Mucosa of descending colon (tissue), 3 donors: ENCODE measurements at regions of chr20 and their contacts with region 1.

Region 1: DNA sequence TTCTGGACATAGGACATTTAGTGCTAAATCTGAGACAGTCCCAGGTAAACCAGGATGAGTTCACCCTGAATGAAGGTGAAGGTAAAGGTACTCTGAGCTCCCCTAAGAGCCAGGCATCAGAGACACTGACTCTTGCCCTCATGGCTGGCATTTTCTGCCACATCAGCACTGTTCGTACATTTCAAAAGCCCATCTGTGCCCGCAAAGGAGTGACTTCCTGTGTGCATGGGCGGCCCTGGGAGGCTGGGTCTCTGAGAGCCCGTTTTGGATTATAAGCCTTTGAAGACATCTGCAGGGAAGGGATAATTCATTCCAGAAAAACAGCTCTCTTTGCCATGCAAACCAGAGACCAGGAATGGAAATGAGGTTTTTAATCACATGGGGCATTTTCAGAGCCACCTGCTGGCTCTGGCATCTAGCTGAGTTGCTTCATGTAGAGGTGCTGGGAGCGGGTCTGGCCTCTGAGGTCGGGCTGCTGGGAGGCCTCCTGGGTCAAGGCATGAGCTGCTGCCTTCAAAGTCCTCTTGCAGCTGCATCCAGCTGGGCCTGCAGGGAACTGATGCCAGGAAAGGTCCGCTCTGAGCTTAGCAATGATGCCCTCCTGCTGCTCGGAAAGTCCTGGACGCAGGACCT is 348.3 kb downstream of the DHX35 start:
- DNase-seq: no peak
- ATAC-seq: no peak
- H3K4me3 ChIP-seq: no peak overlapping the region
- H3K4me1 ChIP-seq: no peaks in the 10 kb centered on the region
- CTCF ChIP-seq: no peak

Region 2: DNA sequence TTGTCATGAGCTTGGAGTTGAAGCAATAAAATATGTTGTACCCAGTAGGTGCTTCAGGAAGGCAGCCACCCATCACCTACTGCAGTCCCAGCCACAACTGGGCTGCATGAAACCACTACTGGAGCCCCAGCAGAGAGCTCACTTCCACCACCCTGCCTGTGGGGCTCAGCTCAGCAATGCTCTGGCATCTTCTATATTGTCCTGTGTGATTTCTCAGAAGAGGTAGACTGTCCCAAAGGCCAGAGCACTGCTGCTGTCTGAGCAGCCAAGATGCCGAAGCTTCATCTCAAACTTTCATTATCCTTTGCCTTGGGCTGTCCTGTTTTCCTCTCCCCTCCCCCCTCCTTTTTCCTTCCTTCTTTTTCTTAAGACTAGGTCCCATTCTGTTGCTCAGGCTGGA is 221.4 kb before region 1 on chr20:
- intact Hi-C with region 1: no loop called
- DNase-seq: no peak
- ATAC-seq: no peak
- H3K4me3 ChIP-seq: no peak overlapping the region
- H3K4me1 ChIP-seq: no peaks in the 10 kb centered on the region
- CTCF ChIP-seq: no peak

Region 3: DNA sequence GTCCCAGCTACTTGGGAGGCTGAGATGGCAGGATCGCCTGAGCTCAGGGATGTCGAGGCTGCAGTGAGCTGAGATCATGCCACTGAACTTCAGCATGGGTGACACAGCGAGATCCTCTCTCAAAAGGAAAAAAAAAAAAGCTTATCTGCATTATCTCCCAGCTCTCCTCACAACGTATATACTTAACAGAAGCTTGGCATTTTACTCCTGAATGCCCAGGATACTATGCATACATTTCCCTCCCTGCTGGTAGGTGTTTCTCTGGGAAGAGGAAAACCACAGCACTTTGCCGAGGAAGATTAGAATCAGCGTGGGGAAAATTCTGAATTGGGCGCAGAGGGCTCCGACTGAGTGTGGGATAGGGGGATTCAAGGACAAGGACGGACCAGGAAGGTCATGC is 452.2 kb after region 1 on chr20:
- intact Hi-C with region 1: loop called in 1 of 2 experiments (anchors 10 kb)
- DNase-seq: no peak
- ATAC-seq: no peak
- H3K4me3 ChIP-seq: no peak overlapping the region
- H3K4me1 ChIP-seq: no peaks in the 10 kb centered on the region
- CTCF ChIP-seq: no peak

Region 4: GRCh38 chr20:39974966-39975510 is 664.6 kb after region 1 on chr20:
- intact Hi-C with region 1: no loop called
- DNase-seq: no peak
- ATAC-seq: no peak
- H3K4me3 ChIP-seq: no peak overlapping the region
- H3K4me1 ChIP-seq: no peaks in the 10 kb centered on the region
- CTCF ChIP-seq: no peak